HEK293 (cell line): ENCODE measurements at regions of chr15 and their contacts with region 1.

Region 1: DNA sequence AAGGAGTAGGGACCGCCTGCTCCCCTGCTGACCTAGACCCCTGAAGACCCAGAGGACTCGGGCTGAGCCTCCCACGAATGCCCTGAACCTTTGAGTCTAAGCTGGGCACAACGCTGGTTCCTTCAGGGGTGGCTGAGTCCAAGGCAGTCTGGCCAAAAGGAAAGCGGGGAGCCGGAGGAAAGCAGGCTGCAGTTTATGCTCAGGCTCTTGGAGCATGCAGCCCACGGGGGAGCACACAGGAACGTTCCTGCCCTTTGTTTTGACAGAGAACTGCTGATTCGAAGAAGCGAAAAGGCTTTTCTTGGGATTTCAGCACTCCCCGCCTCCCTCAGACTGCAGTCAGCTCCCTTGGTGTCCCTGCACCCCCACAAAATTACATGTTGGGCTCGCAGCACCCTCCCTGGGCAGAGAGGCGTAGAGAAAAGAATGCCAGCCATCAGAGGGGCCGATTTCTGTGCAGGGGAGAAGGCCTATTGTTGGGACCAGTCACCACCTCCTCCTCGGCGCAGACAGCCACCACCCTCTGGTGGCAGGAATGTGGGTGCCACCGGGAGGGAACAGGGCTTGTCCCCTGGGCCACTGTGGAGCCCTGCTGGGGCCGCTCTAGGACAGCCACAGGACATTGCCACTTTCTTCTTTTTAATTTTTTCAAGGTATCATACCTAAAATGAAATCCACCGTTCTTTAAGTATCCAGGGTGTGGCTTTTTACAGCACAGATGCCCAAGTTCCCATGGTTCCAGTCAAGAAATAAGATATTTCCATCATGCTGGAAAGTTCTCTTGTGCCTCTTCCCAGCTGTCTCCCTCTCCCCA is 72.2 kb downstream of the SMAD6 start:
- H3K4me3 ChIP-seq: no peak overlapping the region
- H3K27ac ChIP-seq: no peak overlapping the region
- H3K4me1 ChIP-seq: peaks cover 23% of the 10 kb centered on the region
- CTCF ChIP-seq: peak; percentile 99

Region 2: GRCh38 chr15:66603301-66604179 is 170.7 kb before region 1 on chr15:
- CTCF ChIA-PET with region 1: interaction called, 10 read pairs
- POLR2A ChIA-PET with region 1: no interaction called
- H3K4me3 ChIP-seq: no peak overlapping the region
- H3K27ac ChIP-seq: no peak overlapping the region
- H3K4me1 ChIP-seq: no peaks in the 10 kb centered on the region
- CTCF ChIP-seq: peak; percentile 75

Region 3: DNA sequence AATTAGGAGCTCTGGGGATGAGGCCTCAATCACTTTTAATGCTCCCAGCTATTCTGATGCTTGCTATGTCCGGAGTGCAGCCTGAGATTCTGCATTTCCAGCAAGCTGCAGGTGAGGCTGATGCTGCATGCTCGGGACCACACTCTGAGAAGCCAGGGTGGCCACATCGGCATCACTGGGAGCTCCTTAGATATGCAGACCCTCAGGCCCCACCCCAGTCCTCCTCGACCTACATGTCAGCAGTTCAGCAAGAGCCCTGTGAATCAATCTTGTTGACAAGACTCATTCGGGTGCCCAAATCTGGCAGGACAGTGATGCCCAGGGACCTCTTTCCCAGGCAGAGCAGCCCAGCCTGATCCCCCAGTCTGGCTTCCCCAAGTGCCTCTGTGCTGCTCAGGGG is 164.3 kb before region 1 on chr15:
- CTCF ChIA-PET with region 1: interaction called, 10 read pairs
- POLR2A ChIA-PET with region 1: no interaction called
- H3K4me3 ChIP-seq: no peak overlapping the region
- H3K27ac ChIP-seq: no peak overlapping the region
- H3K4me1 ChIP-seq: no peaks in the 10 kb centered on the region
- CTCF ChIP-seq: no peak

Region 4: GRCh38 chr15:66707310-66708082 is 66.7 kb before region 1 on chr15:
- CTCF ChIA-PET with region 1: interaction called, 63 read pairs
- POLR2A ChIA-PET with region 1: interaction called, 6 read pairs
- H3K4me3 ChIP-seq: no peak overlapping the region
- H3K27ac ChIP-seq: peak overlapping the region; percentile 27
- H3K4me1 ChIP-seq: peaks cover 32% of the 10 kb centered on the region
- CTCF ChIP-seq: peak; percentile 61; the same call in 1 of the 2 replicates